Esophagus muscularis mucosa (tissue), 4 donors: ENCODE measurements at regions of chr1 and their contacts with region 1.

Region 1: GRCh38 chr1:147794570-147794969 is 34.2 kb upstream of the GJA5 start:
- DNase-seq: no peak
- H3K4me3 ChIP-seq: no peak overlapping the region
- H3K27ac ChIP-seq: no peak overlapping the region
- H3K4me1 ChIP-seq: no peaks in the 10 kb centered on the region
- H3K27me3 ChIP-seq: no peaks in the 10 kb centered on the region
- CTCF ChIP-seq: no peak
- EP300 ChIP-seq: no peak
- POLR2A ChIP-seq: no peak

Region 2: GRCh38 chr1:147599362-147600118 is 195.0 kb before region 1 on chr1:
- intact Hi-C with region 1: no loop called
- DNase-seq: peak; percentile 99
- H3K4me3 ChIP-seq: peak overlapping the region; percentile 72 to 88 (median 80)
- H3K27ac ChIP-seq: peak overlapping the region; percentile 90 to 95 (median 92)
- H3K4me1 ChIP-seq: peaks cover 16 to 46% (median 42%) of the 10 kb centered on the region in 4 donors
- H3K27me3 ChIP-seq: no peaks in the 10 kb centered on the region
- CTCF ChIP-seq: peak in 1 of 3 experiments; percentile 5
- EP300 ChIP-seq: no peak
- POLR2A ChIP-seq: peak; percentile 79

Region 3: DNA sequence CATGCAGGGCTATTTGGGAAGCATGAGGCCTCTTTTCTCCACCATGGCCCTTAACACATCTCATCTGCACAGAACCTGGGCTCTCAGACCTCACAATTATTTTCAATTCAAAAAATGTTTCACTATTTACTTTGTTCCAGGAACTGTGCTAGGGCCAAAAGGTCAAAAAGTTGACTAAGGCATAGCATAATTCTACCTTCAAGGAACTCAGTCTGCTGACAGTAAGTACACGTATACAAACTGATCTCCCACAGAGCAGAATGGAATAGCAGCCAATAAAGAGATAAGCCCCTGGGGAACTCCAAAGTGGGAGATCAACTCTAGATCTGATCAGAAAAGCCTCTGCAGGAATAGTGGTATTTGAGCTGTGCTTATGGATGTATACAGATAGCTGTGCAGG is 74.4 kb after region 1 on chr1:
- intact Hi-C with region 1: loop called (anchors 10 kb)
- DNase-seq: no peak
- H3K4me3 ChIP-seq: no peak overlapping the region
- H3K27ac ChIP-seq: no peak overlapping the region
- H3K4me1 ChIP-seq: no peaks in the 10 kb centered on the region
- H3K27me3 ChIP-seq: no peaks in the 10 kb centered on the region
- CTCF ChIP-seq: no peak
- EP300 ChIP-seq: no peak
- POLR2A ChIP-seq: no peak